ENCODE measurements at regions of chr11 and their contacts with region 1.

Region 1: DNA sequence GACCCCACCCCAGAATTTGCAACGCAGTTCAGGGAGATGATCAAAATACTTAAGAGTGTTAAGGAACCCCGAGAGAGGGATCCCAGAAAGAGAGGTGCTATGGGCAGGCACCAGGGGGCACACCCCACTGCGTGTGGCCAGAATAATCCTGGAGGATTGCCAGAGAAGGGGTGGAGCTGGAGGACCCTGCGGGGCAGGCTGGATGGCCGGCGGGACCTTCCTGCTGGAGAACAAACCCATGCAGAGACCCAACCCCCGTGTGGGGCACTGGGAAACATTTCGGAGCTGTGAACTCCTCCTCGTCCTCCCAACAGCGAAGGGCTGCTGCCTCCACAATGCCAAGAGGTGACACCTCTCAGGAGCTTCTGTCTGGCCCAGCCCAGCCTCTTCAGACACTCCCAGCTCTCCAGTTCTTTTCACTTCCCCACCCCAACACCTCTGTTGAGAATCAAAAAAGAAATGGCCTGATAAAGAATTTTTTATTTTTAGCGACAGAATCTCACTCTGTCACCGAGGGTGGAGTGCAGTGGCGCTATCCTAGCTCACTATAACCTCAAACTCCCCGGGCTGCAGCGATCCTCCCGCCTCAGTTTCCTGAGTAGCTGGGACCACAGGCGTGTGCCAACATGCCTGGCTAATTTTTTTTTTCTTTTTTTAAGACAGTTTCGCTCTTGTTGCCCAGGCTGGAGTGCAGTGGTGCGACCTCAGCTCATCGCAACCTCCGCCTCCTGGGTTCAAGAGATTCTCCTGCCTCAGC is 25.6 kb downstream of the RHOD start:
- DNase-seq: peak; percentile 52
- ATAC-seq: peak; percentile 61
- H3K4me3 Mint-ChIP-seq: peak overlapping the region; percentile 62
- H3K27ac Mint-ChIP-seq: no peak overlapping the region
- H3K4me1 Mint-ChIP-seq: peaks cover 24% of the 10 kb centered on the region
- H3K27me3 Mint-ChIP-seq: no peaks in the 10 kb centered on the region
- CTCF ChIP-seq: no peak

Region 2: GRCh38 chr11:67053896-67054842 is 28.0 kb before region 1 on chr11:
- CTCF ChIA-PET with region 1: interaction called, 42 read pairs
- POLR2A ChIA-PET with region 1: no interaction called
- DNase-seq: peak; percentile 83
- ATAC-seq: peak; percentile 72
- H3K4me3 Mint-ChIP-seq: no peak overlapping the region
- H3K27ac Mint-ChIP-seq: no peak overlapping the region
- H3K4me1 Mint-ChIP-seq: peaks cover 23% of the 10 kb centered on the region
- H3K27me3 Mint-ChIP-seq: no peaks in the 10 kb centered on the region; the same call in 1 of the 2 replicates
- CTCF ChIP-seq: peak; percentile 49

Region 3: GRCh38 chr11:67071420-67072284 is 10.6 kb before region 1 on chr11:
- CTCF ChIA-PET with region 1: interaction called, 17 read pairs
- POLR2A ChIA-PET with region 1: interaction called, 5 read pairs
- DNase-seq: peak; percentile 93
- ATAC-seq: peak; percentile 98
- H3K4me3 Mint-ChIP-seq: peak overlapping the region; percentile 53
- H3K27ac Mint-ChIP-seq: no peak overlapping the region
- H3K4me1 Mint-ChIP-seq: peaks cover 8% of the 10 kb centered on the region; the same call in 1 of the 2 replicates
- H3K27me3 Mint-ChIP-seq: no peaks in the 10 kb centered on the region; the same call in 1 of the 2 replicates
- CTCF ChIP-seq: peak; percentile 90

Region 4: GRCh38 chr11:67095214-67095507 is 12.9 kb after region 1 on chr11:
- CTCF ChIA-PET with region 1: interaction called, 35 read pairs
- POLR2A ChIA-PET with region 1: interaction called, 3 read pairs
- DNase-seq: no peak
- ATAC-seq: no peak
- H3K4me3 Mint-ChIP-seq: no peak overlapping the region
- H3K27ac Mint-ChIP-seq: no peak overlapping the region
- H3K4me1 Mint-ChIP-seq: peaks cover 15% of the 10 kb centered on the region
- H3K27me3 Mint-ChIP-seq: no peaks in the 10 kb centered on the region
- CTCF ChIP-seq: peak; percentile 8; the same call in 1 of the 2 replicates

Region 5: DNA sequence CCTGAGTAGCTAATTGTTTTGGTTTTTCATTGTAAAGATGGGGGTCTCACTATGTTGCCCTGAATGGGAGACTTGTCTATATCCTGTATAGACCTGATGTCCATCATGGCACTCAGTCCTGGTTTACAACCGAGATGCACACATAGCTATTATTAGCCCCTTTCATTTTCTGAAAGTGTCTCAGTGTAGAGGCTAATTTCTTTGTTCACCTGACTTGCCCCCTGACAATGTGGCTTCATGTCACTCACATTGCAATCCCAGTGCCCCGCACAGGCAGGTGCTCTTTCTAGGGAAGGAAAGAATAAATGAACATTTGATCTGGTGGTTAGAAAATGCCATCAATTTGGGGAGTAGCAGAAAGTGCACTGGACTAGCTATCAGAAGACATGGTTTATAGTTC is 23.8 kb after region 1 on chr11:
- CTCF ChIA-PET with region 1: interaction called, 12 read pairs
- POLR2A ChIA-PET with region 1: no interaction called
- DNase-seq: no peak
- ATAC-seq: no peak
- H3K4me3 Mint-ChIP-seq: no peak overlapping the region
- H3K27ac Mint-ChIP-seq: no peak overlapping the region
- H3K4me1 Mint-ChIP-seq: peaks cover 9% of the 10 kb centered on the region
- H3K27me3 Mint-ChIP-seq: no peaks in the 10 kb centered on the region
- CTCF ChIP-seq: no peak

Region 6: DNA sequence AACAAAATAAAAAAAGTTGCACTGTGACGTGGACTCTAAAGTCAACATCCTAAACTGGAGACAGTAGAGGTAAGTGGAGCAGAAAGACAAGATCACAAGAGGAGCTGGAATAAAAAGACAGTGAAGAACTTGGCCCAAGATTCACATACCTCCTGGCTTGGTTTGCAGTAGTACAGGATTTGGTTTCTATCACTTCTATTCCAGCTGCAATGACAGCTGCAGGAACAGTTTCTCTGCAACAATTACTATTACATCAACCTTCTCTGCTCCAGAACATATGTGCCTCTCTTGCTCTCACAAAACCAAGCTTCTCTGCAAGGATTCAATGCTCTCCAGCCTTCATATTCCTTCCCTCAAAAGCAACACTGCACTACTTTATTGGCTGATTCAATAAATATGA is 29.0 kb after region 1 on chr11:
- CTCF ChIA-PET with region 1: interaction called, 33 read pairs
- POLR2A ChIA-PET with region 1: no interaction called
- DNase-seq: no peak
- ATAC-seq: no peak
- H3K4me3 Mint-ChIP-seq: no peak overlapping the region
- H3K27ac Mint-ChIP-seq: no peak overlapping the region
- H3K4me1 Mint-ChIP-seq: peaks cover 17% of the 10 kb centered on the region
- H3K27me3 Mint-ChIP-seq: no peaks in the 10 kb centered on the region
- CTCF ChIP-seq: no peak

Region 7: DNA sequence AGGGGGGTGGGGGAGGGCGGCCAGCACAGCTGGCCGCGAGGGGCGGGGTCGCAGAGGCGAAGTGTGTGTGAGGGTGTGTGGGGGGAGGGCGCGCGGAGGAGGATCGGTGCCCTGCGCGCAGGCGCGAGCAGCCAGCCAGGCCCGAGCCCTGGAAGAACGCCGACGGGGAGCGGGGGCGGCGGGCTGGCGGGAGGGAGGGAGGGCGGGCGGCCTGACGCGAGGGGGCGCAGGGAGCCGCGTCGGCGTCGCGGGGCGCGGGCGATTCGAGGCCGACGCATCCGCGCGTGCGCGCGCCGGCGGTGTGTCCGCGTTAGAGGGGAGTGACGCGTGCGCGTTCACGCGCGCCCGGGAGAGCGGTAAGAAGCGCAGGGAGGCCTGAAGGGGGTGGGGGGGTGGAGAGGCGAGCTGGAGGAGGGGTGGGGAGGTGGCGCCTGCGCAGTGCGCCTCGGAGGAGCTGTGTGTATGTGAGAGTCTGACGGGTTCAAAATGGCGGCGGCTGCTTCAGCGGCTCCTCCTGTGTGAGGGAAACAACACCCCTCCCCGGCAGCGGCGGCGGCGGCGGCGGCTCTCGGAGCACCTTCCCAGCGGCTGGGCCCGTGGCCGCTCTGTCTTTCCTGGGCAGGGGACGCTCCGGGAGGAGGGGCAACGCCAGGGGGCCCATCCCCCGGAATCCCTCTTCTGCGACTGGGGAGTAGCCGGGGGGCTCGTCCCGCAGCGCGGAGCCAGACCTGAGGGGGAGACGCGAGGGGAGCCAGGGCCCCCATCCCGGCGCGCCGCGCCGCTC is 36.8 kb after region 1 on chr11 and contains the start of gene KDM2A:
- CTCF ChIA-PET with region 1: interaction called, 33 read pairs
- POLR2A ChIA-PET with region 1: no interaction called
- DNase-seq: peak; percentile 98
- ATAC-seq: peak; percentile 83
- H3K4me3 Mint-ChIP-seq: peak within 1 kb of the TSS; percentile 94
- H3K27ac Mint-ChIP-seq: peak within 1 kb of the TSS; percentile 96
- H3K4me1 Mint-ChIP-seq: peaks cover 32% of the 10 kb centered on the region
- H3K27me3 Mint-ChIP-seq: peaks cover 4% of the 10 kb centered on the region; the same call in 1 of the 2 replicates
- CTCF ChIP-seq: no peak
- total RNA-seq, gene KDM2A: 54.0 to 58.0 TPM (median 54.3 TPM) in 3 replicates